T-cell (primary cell): ENCODE measurements at regions of chr1 and their contacts with region 1.

Region 1: GRCh38 chr1:42816585-42817434 is at the starts of genes ERMAP and SVBP:
- DNase-seq: peak; percentile 80 to 96 (median 90)
- ATAC-seq: peak; percentile 87 to 91 (median 88)
- H3K4me3 ChIP-seq: peak within 1 kb of the TSS; percentile 66 to 82
- H3K4me3 Mint-ChIP-seq: peak within 1 kb of the TSS; percentile 78 to 84 (median 83)
- H3K27ac ChIP-seq: peak within 1 kb of the TSS; percentile 81
- H3K27ac Mint-ChIP-seq: peak within 1 kb of the TSS; percentile 90 to 93
- H3K4me1 ChIP-seq: peaks cover 10 to 13% of the 10 kb centered on the region in 2 experiments
- H3K4me1 Mint-ChIP-seq: peaks cover 20 to 39% (median 20%) of the 10 kb centered on the region in 3 donors
- H3K27me3 ChIP-seq: no peaks in the 10 kb centered on the region
- H3K27me3 Mint-ChIP-seq: no peaks in the 10 kb centered on the region
- total RNA-seq, gene ERMAP: 5.7 to 7.6 (median 6.7) TPM
- total RNA-seq, gene SVBP: 15.8 to 19.7 (median 18.7) TPM

Region 2: GRCh38 chr1:42730988-42731387 is 85.8 kb before region 1 on chr1:
- CTCF ChIA-PET with region 1: interaction called in 1 of 2 experiments, 10 read pairs
- POLR2A ChIA-PET with region 1: no interaction called
- DNase-seq: peak in 3 of 35 experiments; percentile 8 to 28 (median 9)
- ATAC-seq: no peak
- H3K4me3 ChIP-seq: no peak overlapping the region
- H3K4me3 Mint-ChIP-seq: no peak overlapping the region
- H3K27ac ChIP-seq: no peak overlapping the region
- H3K27ac Mint-ChIP-seq: no peak overlapping the region
- H3K4me1 ChIP-seq: no peaks in the 10 kb centered on the region
- H3K4me1 Mint-ChIP-seq: no peaks in the 10 kb centered on the region
- H3K27me3 ChIP-seq: peaks cover 0 to 14% of the 10 kb centered on the region in 2 experiments
- H3K27me3 Mint-ChIP-seq: peaks cover 0 to 2% of the 10 kb centered on the region in 2 donors

Region 3: GRCh38 chr1:42766741-42767509 is 49.9 kb before region 1 on chr1 and contains the starts of genes C1orf50 and P3H1:
- CTCF ChIA-PET with region 1: interaction called in 1 of 2 experiments, 16 read pairs
- POLR2A ChIA-PET with region 1: interaction called in 1 of 2 experiments, 4 read pairs
- DNase-seq: peak; percentile 99 to 100 (median 100)
- ATAC-seq: peak; percentile 92 to 96 (median 92)
- H3K4me3 ChIP-seq: peak within 1 kb of the TSS; percentile 81 to 86
- H3K4me3 Mint-ChIP-seq: no peak within 1 kb of the TSS
- H3K27ac ChIP-seq: peak within 1 kb of the TSS; percentile 66
- H3K27ac Mint-ChIP-seq: peak within 1 kb of the TSS; percentile 92
- H3K4me1 ChIP-seq: peaks cover 22 to 38% of the 10 kb centered on the region in 2 experiments
- H3K4me1 Mint-ChIP-seq: peaks cover 34 to 45% (median 36%) of the 10 kb centered on the region in 3 donors
- H3K27me3 ChIP-seq: no peaks in the 10 kb centered on the region
- H3K27me3 Mint-ChIP-seq: no peaks in the 10 kb centered on the region
- total RNA-seq, gene C1orf50: 12.4 to 15.3 (median 13.9) TPM
- total RNA-seq, gene P3H1: 23.5 to 62.9 (median 58.3) TPM

Region 4: DNA sequence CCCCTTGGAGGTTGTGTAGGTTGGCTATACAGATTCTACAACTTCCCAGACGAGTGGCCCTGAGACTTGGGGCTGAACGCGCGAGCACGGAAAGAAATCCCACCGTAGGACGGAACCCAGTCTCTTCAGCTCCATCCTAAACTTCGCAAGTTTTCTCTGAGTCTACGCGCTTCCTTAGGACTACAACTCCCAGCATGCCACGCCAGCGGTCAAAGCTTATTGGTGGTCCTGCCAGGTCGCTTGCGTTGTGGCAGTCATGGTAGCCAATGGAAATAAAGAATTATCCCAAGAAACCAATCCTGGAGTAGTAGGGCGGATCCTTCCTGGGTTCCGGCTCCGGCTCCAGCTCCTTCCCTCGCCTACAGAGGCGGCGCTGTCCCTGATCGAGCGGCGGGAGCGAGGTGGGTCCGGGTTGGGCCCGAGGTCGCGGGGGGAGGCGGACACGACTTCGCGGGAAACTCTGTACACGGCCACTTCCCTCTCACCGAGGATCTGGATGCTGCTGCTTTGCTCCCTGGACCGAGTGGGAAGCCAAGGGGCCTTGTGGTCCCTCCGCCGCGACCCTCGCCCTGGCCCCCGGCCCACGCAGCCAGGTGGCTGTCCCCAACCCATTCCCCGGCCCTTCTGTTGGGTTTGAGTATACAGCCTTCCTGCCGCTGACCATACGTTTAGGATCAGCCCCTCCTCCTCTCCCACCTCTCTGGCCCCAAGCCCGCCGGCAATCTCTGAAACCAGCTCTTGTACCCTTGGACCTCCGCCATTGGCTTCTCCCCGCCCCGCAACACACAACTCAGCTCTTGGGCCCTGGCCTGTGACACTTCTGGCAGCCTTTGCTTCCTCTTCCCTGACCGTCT is 29.7 kb after region 1 on chr1 and contains the start of gene ZNF691:
- CTCF ChIA-PET with region 1: interaction called, 6 to 16 read pairs
- POLR2A ChIA-PET with region 1: interaction called, 3 to 4 read pairs
- DNase-seq: peak; percentile 65 to 94 (median 84)
- ATAC-seq: peak; percentile 98 to 99 (median 98)
- H3K4me3 ChIP-seq: peak within 1 kb of the TSS; percentile 72 to 90
- H3K4me3 Mint-ChIP-seq: peak within 1 kb of the TSS; percentile 86 to 94 (median 89)
- H3K27ac ChIP-seq: peak within 1 kb of the TSS; percentile 32
- H3K27ac Mint-ChIP-seq: peak within 1 kb of the TSS; percentile 73 to 94
- H3K4me1 ChIP-seq: peaks cover 4 to 21% of the 10 kb centered on the region in 2 experiments
- H3K4me1 Mint-ChIP-seq: peaks cover 35 to 40% (median 36%) of the 10 kb centered on the region in 3 donors
- H3K27me3 ChIP-seq: no peaks in the 10 kb centered on the region
- H3K27me3 Mint-ChIP-seq: no peaks in the 10 kb centered on the region
- total RNA-seq, gene ZNF691: 4.7 to 14.9 (median 13.0) TPM

Region 5: GRCh38 chr1:42936309-42937078 is 119.7 kb after region 1 on chr1:
- CTCF ChIA-PET with region 1: no interaction called
- POLR2A ChIA-PET with region 1: interaction called in 1 of 2 experiments, 11 read pairs
- DNase-seq: peak in 9 of 35 experiments; percentile 21 to 65 (median 37)
- ATAC-seq: peak in 1 of 4 experiments; percentile 28
- H3K4me3 ChIP-seq: no peak overlapping the region
- H3K4me3 Mint-ChIP-seq: peak overlapping the region; percentile 13 to 85 (median 14)
- H3K27ac ChIP-seq: peak overlapping the region; percentile 83
- H3K27ac Mint-ChIP-seq: peak overlapping the region; percentile 94 to 97
- H3K4me1 ChIP-seq: peaks cover 33 to 99% of the 10 kb centered on the region in 2 experiments
- H3K4me1 Mint-ChIP-seq: peaks cover 97 to 100% (median 98%) of the 10 kb centered on the region in 3 donors
- H3K27me3 ChIP-seq: no peaks in the 10 kb centered on the region
- H3K27me3 Mint-ChIP-seq: no peaks in the 10 kb centered on the region

Region 6: GRCh38 chr1:43334453-43335205 is 517.8 kb after region 1 on chr1:
- CTCF ChIA-PET with region 1: no interaction called
- POLR2A ChIA-PET with region 1: no interaction called
- DNase-seq: no peak
- ATAC-seq: no peak
- H3K4me3 ChIP-seq: no peak overlapping the region
- H3K4me3 Mint-ChIP-seq: no peak overlapping the region
- H3K27ac ChIP-seq: no peak overlapping the region
- H3K27ac Mint-ChIP-seq: no peak overlapping the region
- H3K4me1 ChIP-seq: peaks cover 0 to 7% of the 10 kb centered on the region in 2 experiments
- H3K4me1 Mint-ChIP-seq: peaks cover 6 to 10% (median 8%) of the 10 kb centered on the region in 3 donors
- H3K27me3 ChIP-seq: peaks cover 0 to 10% of the 10 kb centered on the region in 2 experiments
- H3K27me3 Mint-ChIP-seq: no peaks in the 10 kb centered on the region

Region 7: DNA sequence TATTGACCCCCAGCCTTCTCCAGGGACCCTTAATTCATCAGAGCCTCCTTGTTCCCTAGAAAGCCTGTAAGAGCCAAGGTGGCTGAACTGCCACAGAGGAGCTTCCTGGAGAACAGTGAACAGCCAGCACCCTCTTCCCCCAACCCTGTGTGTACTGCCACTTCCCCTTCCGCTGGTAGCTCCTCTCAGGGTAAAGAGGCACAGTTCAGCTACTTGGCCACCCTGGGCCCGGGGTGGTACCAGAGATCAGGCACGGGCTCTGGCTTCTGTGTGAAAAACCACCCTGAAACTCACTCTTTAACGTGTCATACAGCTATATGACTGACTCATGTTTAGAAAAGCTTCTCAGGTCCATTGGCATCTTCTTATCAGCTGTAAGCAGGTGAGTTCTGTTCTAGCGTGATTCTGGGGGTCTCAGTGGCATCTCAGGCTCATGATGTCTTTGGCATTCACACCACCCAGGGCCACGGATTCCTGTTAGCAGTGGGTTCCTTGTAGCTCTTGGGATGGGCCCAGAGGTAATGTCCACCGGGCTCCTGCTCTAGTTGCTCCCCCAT is 1880.1 kb after region 1 on chr1:
- CTCF ChIA-PET with region 1: no interaction called
- POLR2A ChIA-PET with region 1: no interaction called
- DNase-seq: peak in 33 of 35 experiments; percentile 17 to 55 (median 39)
- ATAC-seq: peak; percentile 95 to 100 (median 100)
- H3K4me3 ChIP-seq: peak overlapping the region in 1 of 2 donors; percentile 39
- H3K4me3 Mint-ChIP-seq: peak overlapping the region in 1 of 3 donors; percentile 44
- H3K27ac ChIP-seq: peak overlapping the region; percentile 83
- H3K27ac Mint-ChIP-seq: peak overlapping the region; percentile 93 to 96
- H3K4me1 ChIP-seq: peaks cover 15 to 18% of the 10 kb centered on the region in 2 experiments
- H3K4me1 Mint-ChIP-seq: peaks cover 14 to 25% (median 15%) of the 10 kb centered on the region in 3 donors
- H3K27me3 ChIP-seq: no peaks in the 10 kb centered on the region
- H3K27me3 Mint-ChIP-seq: no peaks in the 10 kb centered on the region